ENCODE measurements at regions of chr5 and their contacts with region 1.

Region 1: GRCh38 chr5:4879693-4880303 is 260.3 kb upstream of the ADAMTS16 start:
- DNase-seq: peak; percentile 32 to 66 (median 51)
- H3K4me3 ChIP-seq: no peak overlapping the region
- H3K27ac ChIP-seq: no peak overlapping the region
- H3K4me1 ChIP-seq: peaks cover 0 to 7% (median 0%) of the 10 kb centered on the region in 4 experiments
- H3K27me3 ChIP-seq: no peaks in the 10 kb centered on the region

Region 2: GRCh38 chr5:4862500-4862899 is 17.3 kb before region 1 on chr5:
- CTCF ChIA-PET with region 1: interaction called, 17 read pairs
- POLR2A ChIA-PET with region 1: no interaction called
- DNase-seq: peak; percentile 44 to 67 (median 57)
- H3K4me3 ChIP-seq: no peak overlapping the region
- H3K27ac ChIP-seq: no peak overlapping the region
- H3K4me1 ChIP-seq: peaks cover 0 to 10% (median 0%) of the 10 kb centered on the region in 4 experiments
- H3K27me3 ChIP-seq: peaks cover 0 to 3% (median 0%) of the 10 kb centered on the region in 5 experiments

Region 3: DNA sequence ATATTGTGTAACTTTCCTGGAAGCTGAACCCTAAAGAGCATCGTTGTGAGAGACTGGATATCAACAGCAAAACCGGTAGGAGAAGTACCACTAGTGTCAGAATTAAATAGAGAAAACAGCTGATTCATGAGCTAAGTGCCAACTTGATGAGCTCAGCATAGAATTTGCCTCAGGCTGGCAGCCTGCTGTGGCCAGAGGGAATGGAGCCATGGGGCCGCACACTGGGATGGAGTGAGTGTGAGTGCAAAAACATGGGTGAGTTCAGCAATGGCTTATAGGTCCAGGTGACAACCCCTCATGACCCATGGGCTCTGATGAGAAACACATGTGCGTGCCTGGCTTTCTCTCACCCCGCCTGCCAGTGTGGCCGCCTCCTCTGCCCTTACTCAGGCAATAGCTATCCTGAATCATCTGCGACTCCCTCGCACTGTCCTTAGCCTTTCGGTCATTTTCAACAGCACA is 285.8 kb after region 1 on chr5:
- CTCF ChIA-PET with region 1: no interaction called
- POLR2A ChIA-PET with region 1: no interaction called
- DNase-seq: no peak
- H3K4me3 ChIP-seq: no peak overlapping the region
- H3K27ac ChIP-seq: no peak overlapping the region
- H3K4me1 ChIP-seq: peaks cover 0 to 2% (median 0%) of the 10 kb centered on the region in 4 experiments
- H3K27me3 ChIP-seq: no peaks in the 10 kb centered on the region

Measured in common myeloid progenitor, CD34-positive (primary cell).